ENCODE measurements at regions of chr2 and their contacts with region 1.

Region 1: DNA sequence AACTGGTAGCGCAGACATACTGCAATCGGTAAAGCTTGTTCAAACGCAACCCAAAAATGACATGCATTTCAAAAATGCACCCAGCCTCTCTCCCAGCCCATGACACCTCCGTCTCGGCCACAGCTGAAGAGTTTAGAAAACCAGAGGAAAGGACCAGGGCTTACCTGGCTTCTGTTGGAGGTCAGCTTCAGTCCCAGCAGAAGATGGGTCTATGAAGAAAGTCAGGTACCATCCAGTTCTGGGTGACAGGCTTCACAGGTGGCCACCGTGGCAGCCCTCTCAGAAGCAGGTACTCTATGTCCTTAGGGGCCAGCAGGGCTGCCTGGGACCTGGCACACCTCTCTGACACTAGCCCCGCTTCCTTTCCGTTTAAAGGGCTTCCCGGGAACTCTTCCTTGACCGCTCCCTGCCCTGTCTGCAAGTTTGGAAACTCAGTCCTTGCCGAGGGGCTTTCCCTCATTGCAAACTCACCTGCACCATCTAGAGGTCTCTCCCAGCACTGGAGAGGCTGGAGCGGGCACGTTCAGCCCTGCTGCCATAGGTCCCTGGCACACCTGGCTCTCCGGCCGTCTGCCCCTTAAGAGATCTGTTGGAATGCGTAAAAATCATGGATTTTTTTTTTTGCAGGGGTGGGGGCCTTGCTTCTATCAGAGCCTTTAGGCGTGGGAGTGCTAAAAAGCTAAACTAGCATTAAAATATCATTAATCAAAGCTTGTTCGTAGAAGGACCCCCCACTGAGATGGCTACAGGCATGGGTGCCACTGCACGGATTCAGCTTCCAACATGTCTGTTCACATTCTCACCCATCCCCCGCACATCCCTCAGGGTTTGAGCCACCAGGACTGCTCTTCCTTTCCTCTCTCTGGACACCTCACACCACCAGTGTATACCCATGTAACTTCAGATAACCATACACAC is at the start of gene EDAR:
- DNase-seq: peak; percentile 64 to 65
- ATAC-seq: peak; percentile 93 to 95
- H3K4me3 ChIP-seq: peak within 1 kb of the TSS; percentile 29; the same call in 1 of the 3 replicates
- H3K27ac ChIP-seq: 0 out of 6 replicates have a peak within 1 kb of the TSS, but pooled peaks of 1 of the 2 experiments have one; percentile 9
- H3K4me1 ChIP-seq: peaks cover 9% of the 10 kb centered on the region
- CTCF ChIP-seq: peak; percentile 67
- EP300 ChIP-seq: no peak
- POLR2A ChIP-seq: no peak
- RAD21 ChIP-seq: peak; percentile 69 to 82
- polyA plus RNA-seq, gene EDAR: 0.26 and 0.32 TPM in 2 replicates

Region 2: DNA sequence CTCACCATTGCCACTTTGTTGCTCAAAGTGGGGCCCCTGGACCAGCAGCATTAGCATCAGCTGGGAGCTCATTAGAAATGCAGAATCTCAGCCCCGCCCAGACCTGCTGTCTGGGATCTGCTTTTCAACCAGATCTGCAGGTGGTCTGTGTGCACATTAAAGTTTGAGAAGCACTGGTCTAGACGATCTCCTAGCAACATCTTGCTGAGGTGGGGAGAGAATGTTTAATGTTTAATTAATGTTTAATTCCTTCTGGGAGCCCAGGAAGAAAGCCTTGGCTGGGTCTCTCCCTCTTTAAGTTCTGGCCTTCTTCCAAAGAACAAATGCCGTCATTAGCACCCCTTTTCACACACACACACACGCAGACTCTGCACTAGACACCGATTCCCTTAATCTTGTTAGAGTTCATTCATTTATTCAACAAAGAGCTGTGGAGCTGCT is 53.7 kb before region 1 on chr2:
- CTCF ChIA-PET with region 1: interaction called, 10 read pairs
- POLR2A ChIA-PET with region 1: interaction called, 4 read pairs
- DNase-seq: no peak
- ATAC-seq: no peak
- H3K4me3 ChIP-seq: no peak overlapping the region
- H3K27ac ChIP-seq: no peak overlapping the region
- H3K4me1 ChIP-seq: peaks cover 10% of the 10 kb centered on the region; the same call in 1 of the 3 replicates
- CTCF ChIP-seq: no peak
- EP300 ChIP-seq: no peak
- POLR2A ChIP-seq: no peak
- RAD21 ChIP-seq: no peak

Region 3: DNA sequence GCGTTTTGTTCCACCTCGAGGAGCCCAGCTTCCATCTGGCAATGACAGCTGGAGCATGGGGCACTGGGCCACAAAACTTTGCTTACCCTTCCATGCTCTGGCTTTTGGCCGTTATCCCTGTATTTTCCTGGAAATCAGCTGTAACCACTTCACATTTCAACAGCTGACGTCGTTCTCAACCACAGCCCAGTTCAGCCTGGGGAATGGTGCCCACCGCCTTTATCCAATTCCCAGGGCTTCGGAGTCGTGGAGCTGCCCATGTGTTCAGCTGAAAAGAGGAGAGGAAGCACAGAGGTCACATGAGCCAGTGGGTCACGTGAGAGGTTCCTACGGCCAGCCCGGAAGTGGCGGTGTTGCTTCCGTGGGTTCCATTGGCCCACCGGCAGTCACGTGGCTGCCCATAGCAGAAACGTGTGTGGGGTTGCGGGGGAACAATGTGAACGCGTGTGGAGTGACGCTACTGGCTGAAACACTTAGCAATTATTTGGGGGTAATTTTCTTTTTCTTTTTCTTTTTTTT is 16.7 kb after region 1 on chr2:
- CTCF ChIA-PET with region 1: interaction called, 12 read pairs
- POLR2A ChIA-PET with region 1: no interaction called
- DNase-seq: no peak
- ATAC-seq: no peak
- H3K4me3 ChIP-seq: no peak overlapping the region
- H3K27ac ChIP-seq: no peak overlapping the region
- H3K4me1 ChIP-seq: no peaks in the 10 kb centered on the region; the same call in 2 of the 3 replicates
- CTCF ChIP-seq: no peak
- EP300 ChIP-seq: no peak
- POLR2A ChIP-seq: no peak
- RAD21 ChIP-seq: no peak

Region 4: DNA sequence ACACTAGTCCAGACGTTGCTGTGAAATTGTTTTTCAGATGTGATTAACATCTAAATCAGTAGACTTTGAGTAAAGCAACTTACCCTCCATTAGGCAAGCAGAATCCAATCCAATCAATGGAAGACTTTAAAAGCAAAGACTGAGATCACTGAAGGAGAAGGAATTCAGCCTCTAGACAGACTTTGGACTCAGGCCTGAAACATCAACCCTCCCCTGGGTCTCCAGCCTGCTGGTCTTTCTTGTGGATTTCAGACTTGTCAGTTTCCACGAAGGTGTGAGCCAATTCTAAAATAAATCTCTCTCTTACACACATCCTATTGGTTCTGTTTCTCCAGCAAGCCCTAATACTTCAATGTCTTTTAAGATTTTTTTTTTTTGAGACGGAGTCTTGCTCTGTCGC is 49.9 kb after region 1 on chr2:
- CTCF ChIA-PET with region 1: no interaction called
- POLR2A ChIA-PET with region 1: no interaction called
- DNase-seq: no peak
- ATAC-seq: no peak
- H3K4me3 ChIP-seq: no peak overlapping the region
- H3K27ac ChIP-seq: no peak overlapping the region
- H3K4me1 ChIP-seq: no peaks in the 10 kb centered on the region
- CTCF ChIP-seq: no peak
- EP300 ChIP-seq: no peak
- POLR2A ChIP-seq: no peak
- RAD21 ChIP-seq: no peak